ENCODE measurements at regions of chr2 and their contacts with region 1.

Region 1: GRCh38 chr2:42141687-42142546 is 27.2 kb upstream of the EML4 start:
- DNase-seq: no peak
- ATAC-seq: peak; percentile 67
- H3K4me3 Mint-ChIP-seq: peak overlapping the region; percentile 53
- H3K27ac Mint-ChIP-seq: peak overlapping the region; percentile 41
- H3K4me1 Mint-ChIP-seq: peaks cover 33% of the 10 kb centered on the region
- H3K27me3 Mint-ChIP-seq: no peaks in the 10 kb centered on the region
- CTCF ChIP-seq: no peak

Region 2: GRCh38 chr2:42127425-42128424 is 14.2 kb before region 1 on chr2:
- CTCF ChIA-PET with region 1: no interaction called
- POLR2A ChIA-PET with region 1: interaction called, 31 read pairs
- intact Hi-C with region 1: no loop called
- DNase-seq: no peak
- ATAC-seq: peak; percentile 57
- H3K4me3 Mint-ChIP-seq: peak overlapping the region; percentile 66
- H3K27ac Mint-ChIP-seq: peak overlapping the region; percentile 75
- H3K4me1 Mint-ChIP-seq: peaks cover 89% of the 10 kb centered on the region
- H3K27me3 Mint-ChIP-seq: no peaks in the 10 kb centered on the region
- CTCF ChIP-seq: no peak

Region 3: GRCh38 chr2:42161444-42161843 is 19.5 kb after region 1 on chr2:
- CTCF ChIA-PET with region 1: interaction called, 4 read pairs
- POLR2A ChIA-PET with region 1: no interaction called
- intact Hi-C with region 1: loop called (anchors 2 kb)
- DNase-seq: no peak
- ATAC-seq: peak; percentile 31
- H3K4me3 Mint-ChIP-seq: no peak overlapping the region
- H3K27ac Mint-ChIP-seq: no peak overlapping the region
- H3K4me1 Mint-ChIP-seq: peaks cover 27% of the 10 kb centered on the region
- H3K27me3 Mint-ChIP-seq: no peaks in the 10 kb centered on the region
- CTCF ChIP-seq: no peak

Measured in activated B cell treated with CpG ODN at 0.5 μM for 24 hours (primary cell).